ENCODE measurements at regions of chr15 and their contacts with region 1.

Region 1: DNA sequence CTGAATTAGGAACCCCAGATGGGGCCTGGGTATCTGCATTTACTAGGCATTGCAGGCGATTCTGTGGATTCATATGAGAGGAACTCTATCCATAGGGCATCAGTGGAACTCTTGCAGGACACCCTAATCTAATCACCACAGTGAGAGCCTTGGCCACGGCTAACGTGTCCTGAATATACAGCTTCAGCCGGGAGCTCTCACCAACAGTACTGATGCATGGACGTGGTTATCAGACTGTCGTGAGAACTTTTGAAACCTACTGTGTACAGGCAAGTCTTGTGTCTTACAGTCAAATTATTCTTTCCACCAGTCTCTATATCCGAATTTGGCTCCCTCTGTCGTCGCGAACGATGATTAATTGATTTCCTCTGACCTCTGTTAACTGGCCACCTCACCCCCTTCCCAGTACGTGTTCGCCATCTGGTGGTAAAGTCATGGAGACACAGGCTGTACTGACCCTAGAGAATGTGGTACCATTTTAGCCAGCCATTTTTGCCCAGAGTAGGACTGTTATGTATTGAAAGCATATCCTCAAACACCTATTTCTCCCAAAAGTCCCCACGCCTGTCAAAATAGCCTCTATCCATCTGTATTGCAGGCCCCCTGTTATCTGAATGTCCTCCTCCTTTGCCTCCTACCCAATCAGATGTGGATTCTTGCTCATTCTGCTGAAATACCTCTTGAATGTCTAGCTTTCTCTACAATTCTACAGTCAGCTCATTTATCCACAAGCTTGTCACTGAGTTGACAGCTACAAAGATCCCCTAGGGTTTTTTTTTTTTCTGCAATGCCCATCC is 39.7 kb downstream of the GLDN start:
- DNase-seq: no peak

Region 2: DNA sequence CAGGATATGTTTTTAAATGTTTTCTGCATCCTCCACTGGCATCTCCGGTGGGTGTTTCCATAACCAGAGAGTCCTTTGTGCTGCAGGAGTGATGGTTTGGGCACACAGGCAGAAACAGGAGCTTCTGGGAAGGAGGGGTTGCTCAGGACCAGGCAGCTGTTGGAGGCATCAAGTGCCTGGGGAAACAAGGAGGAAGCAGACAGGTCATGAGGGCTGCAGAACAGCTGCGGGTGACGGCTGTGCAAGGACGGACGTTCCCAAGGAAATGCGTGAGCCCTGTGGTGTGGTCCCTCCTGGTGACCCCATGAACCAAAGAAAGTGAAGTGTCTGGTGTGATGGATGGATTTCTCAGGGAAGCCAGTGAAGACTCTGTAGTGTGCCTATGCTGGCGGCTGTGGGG is 225.3 kb before region 1 on chr15:
- intact Hi-C with region 1: loop called (anchors 5 kb)
- DNase-seq: no peak

Region 3: DNA sequence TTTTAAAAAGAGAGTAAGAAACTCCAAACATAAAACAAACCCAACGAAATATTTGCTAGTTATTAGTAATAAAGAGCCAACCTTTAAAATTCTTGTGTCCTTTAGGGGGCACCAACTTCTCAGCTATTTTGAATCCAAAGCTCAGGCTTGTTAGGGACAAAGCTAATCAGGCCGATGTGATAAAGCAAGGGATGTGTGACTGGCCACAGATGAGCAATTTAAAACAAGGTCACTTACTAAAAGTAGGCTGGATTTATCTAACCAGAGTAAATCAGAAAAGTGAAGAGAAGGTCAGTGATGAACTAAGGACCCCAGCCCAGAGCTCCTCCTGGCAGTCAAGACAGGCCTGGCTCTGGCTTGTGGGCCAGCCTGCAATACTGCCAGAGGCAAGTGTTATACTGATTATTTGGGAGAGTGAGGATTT is 151.3 kb before region 1 on chr15:
- intact Hi-C with region 1: loop called (anchors 2 kb)
- DNase-seq: no peak

Region 4: DNA sequence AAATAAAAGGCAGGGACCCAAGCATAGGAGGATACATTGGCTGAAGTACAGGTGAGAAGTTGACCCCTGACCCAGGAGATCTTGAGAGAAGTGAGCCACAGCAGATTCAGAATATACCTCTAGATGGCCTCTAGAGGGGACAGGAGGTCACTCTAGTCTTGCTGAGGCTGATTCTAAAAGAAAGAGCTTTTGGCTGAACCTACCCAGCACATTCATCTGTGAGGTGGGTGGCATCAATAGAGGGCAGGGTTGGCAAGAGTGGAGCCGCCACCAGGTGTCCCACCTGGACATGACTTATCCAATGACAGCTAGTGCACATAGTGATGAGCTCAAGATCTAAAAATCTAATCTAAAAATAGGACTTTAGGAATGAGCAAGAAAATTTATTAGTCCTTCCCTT is 94.4 kb before region 1 on chr15:
- intact Hi-C with region 1: loop called (anchors 2 kb)
- DNase-seq: no peak